HepG2 (cell line): ENCODE measurements at regions of chr3 and their contacts with region 1.

Region 1: DNA sequence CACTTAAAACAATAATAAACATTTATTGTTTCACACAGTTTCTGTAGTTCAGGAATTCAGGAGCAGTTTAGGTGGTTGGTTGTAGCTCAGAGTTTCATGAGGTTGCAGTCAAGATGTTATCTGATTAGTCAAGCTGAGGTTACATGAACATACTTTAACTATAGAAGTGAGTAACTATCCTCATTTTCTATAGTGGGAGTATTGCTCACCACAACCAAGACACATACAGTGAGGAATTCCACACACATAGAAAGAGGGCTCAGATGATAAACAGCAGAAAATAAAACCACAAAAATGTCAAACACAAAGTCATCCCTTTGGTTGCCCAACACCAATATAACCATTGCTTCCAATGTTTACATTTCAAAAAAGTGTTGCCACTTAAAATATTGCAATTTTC is 13.6 kb downstream of the SCN11A start:
- DNase-seq: no peak
- ATAC-seq: no peak
- H3K4me3 ChIP-seq: no peak overlapping the region
- H3K27ac ChIP-seq: no peak overlapping the region
- H3K4me1 ChIP-seq: no peaks in the 10 kb centered on the region
- H3K27me3 ChIP-seq: no peaks in the 10 kb centered on the region; a peak in 1 of 5 replicates
- CTCF ChIP-seq: no peak
- EP300 ChIP-seq: no peak
- POLR2A ChIP-seq: no peak
- RAD21 ChIP-seq: no peak

Region 2: DNA sequence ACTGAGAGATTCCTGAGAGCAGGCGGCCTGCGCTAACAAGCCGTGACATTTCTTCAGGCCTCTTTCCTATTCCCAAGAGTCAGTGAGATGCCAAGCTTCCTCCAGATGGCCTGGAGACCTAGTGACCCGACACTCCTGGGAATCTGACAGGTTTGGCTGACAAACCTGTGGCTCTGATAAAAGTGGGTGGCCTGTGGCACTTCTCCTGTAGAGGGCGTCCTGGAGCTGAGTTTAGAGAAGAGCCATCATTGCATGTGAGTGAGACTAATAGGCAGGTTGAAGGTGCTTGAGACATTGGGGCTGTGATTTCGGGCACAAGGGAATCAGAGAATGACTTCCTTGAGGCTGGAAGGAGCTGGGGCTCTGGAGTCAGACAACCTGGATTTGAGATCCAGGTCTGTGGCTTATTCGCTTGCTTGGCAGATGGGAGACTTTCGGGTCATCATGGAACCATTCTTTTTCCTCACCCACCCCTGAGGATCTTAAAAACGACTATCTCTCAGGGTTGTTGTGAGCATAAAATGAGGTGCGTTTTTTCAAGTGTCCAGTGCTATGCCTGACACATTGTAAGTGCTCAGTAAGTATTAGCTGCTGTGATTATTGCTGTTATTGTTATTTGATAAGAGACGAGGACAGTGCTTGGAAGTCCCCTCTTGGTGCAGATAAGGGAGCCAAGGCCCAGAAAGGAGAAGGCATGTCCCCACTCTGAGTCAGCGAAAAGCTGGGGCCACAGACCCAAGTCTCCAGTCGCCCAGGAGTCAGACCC is 299.4 kb before region 1 on chr3:
- CTCF ChIA-PET with region 1: no interaction called
- POLR2A ChIA-PET with region 1: no interaction called
- in situ Hi-C with region 1: no loop called
- intact Hi-C with region 1: loop called (anchors 5 kb)
- DNase-seq: peak; percentile 27
- ATAC-seq: peak; percentile 78
- H3K4me3 ChIP-seq: no peak overlapping the region
- H3K27ac ChIP-seq: no peak overlapping the region
- H3K4me1 ChIP-seq: no peaks in the 10 kb centered on the region
- H3K27me3 ChIP-seq: peaks cover 0 to 1% of the 10 kb centered on the region in 2 experiments; a peak in 2 of 5 replicates
- CTCF ChIP-seq: peak; percentile 63
- EP300 ChIP-seq: no peak
- POLR2A ChIP-seq: no peak
- RAD21 ChIP-seq: no peak